ENCODE measurements at regions of chr14 and their contacts with region 1.

Region 1: DNA sequence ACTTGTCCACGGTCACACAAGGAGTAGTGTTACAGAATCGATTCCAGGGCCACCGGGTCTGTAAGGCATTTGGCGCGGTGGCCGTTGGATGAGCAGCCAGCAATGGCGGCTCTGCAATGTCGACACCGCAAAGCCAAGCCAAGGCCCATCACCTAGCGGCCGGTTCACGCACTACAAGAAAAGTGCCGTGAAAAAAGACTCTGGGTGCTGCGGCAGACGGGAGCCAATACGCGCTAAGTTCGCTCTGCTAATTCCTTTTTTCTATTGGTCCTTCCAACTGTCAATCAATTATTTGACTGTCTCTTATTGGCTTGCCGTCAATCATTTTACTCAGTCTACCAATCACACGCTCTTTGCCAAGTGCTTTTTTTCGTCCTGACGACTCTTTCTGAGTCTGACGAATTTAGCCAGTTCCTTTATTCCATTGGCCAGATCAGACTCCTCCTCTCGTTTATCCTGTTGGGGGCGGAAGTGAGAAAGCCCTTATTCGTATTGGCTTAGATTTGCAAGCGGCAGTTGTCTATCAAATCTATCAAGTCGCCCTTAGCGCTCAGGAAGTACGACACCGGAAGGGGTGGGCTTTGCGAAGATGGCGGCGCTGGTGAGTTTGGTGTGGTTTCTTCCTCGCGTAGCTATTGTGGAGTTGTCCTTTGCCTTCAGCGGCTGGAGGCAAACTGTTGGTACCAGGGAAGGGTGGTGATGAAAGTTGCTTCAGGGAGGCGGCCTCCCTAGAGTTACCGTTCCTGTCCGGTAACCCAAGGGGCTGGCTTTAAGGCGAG is at the start of gene NGDN:
- DNase-seq: peak; percentile 92 to 97 (median 95)
- ATAC-seq: peak; percentile 93 to 98 (median 94)
- H3K4me3 ChIP-seq: peak within 1 kb of the TSS; percentile 61 to 96 (median 74)
- H3K27ac ChIP-seq: peak within 1 kb of the TSS; percentile 66 to 81 (median 72)
- H3K4me1 ChIP-seq: peaks cover 0 to 6% (median 5%) of the 10 kb centered on the region in 3 donors
- H3K27me3 ChIP-seq: no peaks in the 10 kb centered on the region
- CTCF ChIP-seq: peak; percentile 72 to 91 (median 81)
- total RNA-seq, gene NGDN: 9.8 to 18.8 (median 15.4) TPM

Region 2: DNA sequence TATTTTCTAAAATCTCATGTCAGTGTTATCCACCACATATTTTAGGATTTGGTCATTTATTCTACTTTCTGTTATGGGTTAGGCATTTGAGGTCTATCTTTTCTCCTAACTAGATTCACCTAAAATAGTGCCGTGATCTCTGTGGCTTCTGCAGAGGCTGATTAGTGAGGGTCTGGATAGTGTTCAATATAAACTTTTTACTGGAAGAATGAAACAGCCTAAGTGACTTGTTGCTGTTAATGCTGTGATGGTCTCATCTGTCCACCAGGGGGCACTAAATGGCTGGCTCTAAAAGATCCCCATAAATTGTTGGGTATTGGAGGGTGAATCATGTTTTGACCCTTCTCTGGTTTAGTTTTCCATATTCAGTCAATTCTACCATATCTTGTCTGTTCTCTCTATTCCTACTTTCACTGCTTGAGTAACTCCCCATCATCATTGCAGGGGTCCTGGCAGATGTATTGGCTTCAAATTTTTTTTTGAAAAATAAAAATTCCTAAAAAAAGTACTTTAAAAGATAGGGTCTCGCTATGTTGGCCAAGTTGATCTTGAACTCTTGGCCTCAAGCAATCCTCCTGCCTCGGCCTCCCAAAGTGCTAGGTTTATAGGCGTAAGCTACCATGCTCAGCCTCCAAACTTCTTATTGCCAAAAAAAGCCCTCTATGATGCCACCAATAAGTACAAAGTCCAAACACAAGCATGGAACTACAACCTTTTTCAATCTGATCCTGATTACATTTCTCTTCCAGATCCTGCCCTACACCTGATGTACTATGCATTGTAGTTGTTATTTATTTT is 141.2 kb before region 1 on chr14:
- intact Hi-C with region 1: loop called in 1 of 3 experiments (anchors 5 kb)
- DNase-seq: peak in 4 of 6 donors; percentile 52 to 77 (median 61)
- ATAC-seq: peak; percentile 75 to 96 (median 90)
- H3K4me3 ChIP-seq: no peak overlapping the region
- H3K27ac ChIP-seq: no peak overlapping the region
- H3K4me1 ChIP-seq: peaks cover 0 to 8% (median 4%) of the 10 kb centered on the region in 3 donors
- H3K27me3 ChIP-seq: no peaks in the 10 kb centered on the region
- CTCF ChIP-seq: peak; percentile 70 to 84 (median 79)